ENCODE measurements at regions of chr10 and their contacts with region 1.

Region 1: DNA sequence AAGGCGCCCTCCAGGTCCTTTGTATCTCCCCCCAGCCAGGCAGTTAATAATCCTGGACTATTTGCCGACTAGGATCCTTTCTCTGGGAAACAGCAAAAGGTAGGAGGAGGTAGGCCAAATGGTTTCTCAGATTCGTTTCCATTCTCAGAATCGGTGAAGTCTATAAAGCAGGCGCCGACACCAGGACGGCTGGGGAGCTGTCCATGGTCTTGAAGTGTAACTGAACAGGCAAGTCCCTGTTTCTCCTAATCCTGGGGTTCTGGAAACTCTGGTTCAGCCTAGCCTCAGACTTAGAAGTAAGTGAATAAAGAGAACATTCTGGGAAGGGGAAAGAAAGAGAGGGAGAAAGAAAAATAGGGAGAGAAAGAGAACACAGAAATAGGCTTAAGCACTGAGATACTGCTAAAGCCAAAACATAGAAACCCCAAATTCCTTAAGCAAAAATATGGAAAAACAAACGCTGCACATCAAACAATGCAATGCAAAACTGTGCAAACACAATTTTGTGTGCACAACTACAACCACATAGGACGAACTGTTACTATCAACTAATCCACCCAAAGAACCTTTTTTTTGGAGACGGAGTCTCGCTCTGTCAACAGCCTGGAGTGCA is 11.1 kb upstream of the INA start:
- DNase-seq: peak; percentile 42
- ATAC-seq: peak; percentile 65
- H3K4me3 ChIP-seq: no peak overlapping the region
- H3K27ac ChIP-seq: no peak overlapping the region
- H3K4me1 ChIP-seq: no peaks in the 10 kb centered on the region
- H3K27me3 ChIP-seq: peaks cover 26% of the 10 kb centered on the region
- CTCF ChIP-seq: no peak
- POLR2A ChIP-seq: no peak
- RAD21 ChIP-seq: no peak

Region 2: DNA sequence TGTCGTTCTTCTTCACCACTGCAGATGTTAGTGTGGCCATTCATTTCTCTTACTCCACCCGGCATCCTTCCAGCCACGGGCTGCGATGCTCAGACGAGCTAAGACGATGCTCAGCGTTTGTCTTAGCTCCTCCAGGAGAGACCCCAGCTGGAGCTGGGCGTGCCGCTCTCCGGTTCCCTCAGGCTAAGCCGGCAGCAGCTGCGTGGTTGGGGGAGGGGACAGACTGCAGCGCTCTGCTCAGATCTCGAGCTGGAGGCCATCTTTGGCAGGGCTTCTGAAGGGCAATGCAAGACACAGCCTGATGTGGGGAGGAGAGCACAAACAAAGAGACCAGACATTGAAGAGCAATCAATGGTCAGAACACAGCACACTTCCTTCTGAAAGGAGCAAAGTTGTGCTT is 15.9 kb after region 1 on chr10:
- CTCF ChIA-PET with region 1: no interaction called
- POLR2A ChIA-PET with region 1: interaction called, 3 read pairs
- RAD21 ChIA-PET with region 1: no interaction called
- intact Hi-C with region 1: loop called (anchors 2 kb)
- DNase-seq: no peak
- ATAC-seq: no peak
- H3K4me3 ChIP-seq: no peak overlapping the region
- H3K27ac ChIP-seq: no peak overlapping the region
- H3K4me1 ChIP-seq: no peaks in the 10 kb centered on the region
- H3K27me3 ChIP-seq: peaks cover 47% of the 10 kb centered on the region
- CTCF ChIP-seq: no peak
- POLR2A ChIP-seq: no peak
- RAD21 ChIP-seq: no peak

Region 3: DNA sequence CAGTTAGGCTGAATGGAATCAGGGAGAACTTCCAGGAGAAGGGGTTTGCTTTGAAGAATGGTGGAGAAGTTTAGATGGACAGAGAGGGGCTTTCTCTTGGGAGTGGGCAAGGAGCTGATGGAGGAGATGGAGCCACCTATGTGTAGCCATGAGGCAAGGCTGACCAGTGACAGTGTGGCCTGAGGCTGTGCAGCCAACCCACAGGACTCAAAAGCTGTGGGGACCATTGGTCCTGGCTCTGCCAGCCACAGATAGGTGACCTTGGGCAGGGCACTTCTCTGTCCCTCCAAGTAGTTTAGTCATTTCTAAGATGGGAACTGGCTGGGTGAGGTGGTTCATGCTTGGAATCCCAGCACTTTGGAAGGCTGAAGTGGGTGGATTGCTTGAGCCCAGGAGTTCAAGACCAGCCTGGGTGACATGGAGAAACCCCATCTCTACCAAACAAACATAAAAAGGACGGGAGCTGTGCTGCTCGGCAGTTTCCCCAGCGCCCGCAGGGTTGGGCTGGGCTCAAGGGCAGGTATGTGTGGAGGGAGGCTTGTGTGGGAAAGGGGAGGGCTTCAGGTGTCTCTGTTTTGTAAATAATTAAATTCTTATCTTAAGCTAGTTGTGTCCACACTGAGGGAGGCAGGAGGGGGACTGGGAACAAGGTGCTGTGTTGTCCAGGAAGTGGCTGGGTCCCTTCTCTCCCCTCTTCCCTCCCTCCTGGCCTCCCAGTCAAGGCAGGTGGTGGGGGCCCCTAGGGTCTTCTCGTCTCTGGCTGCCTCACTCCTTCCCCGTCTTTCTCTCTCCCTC is 246.6 kb after region 1 on chr10:
- CTCF ChIA-PET with region 1: no interaction called
- POLR2A ChIA-PET with region 1: no interaction called
- RAD21 ChIA-PET with region 1: no interaction called
- intact Hi-C with region 1: no loop called
- DNase-seq: no peak
- ATAC-seq: no peak
- H3K4me3 ChIP-seq: no peak overlapping the region
- H3K27ac ChIP-seq: no peak overlapping the region
- H3K4me1 ChIP-seq: peaks cover 0 to 12% of the 10 kb centered on the region in 2 experiments; a peak in 2 of 4 replicates
- H3K27me3 ChIP-seq: no peaks in the 10 kb centered on the region
- CTCF ChIP-seq: no peak
- POLR2A ChIP-seq: no peak
- RAD21 ChIP-seq: no peak